ENCODE measurements at regions of chr3 and their contacts with region 1.

Region 1: DNA sequence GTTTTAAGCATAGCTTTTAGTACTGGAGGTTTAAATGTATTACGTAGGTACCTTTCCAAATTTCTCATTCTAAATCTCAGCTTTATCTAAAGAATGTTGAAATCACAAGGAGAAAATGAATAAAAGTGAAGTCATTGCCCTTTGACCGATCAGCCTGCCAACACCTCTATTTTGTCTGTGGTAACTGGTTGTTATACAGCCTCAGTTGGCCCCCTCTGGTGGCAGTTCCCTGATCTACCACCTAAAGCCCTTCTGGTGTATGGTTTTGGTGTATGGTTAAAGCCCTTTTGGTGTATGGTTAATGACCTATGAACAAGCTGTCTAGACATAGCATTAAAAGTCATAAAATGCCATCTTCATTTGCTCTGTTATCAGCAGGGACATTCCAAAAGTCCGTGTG is 378.2 kb upstream of the AZI2 start:
- DNase-seq: peak in 2 of 3 donors; percentile 66 to 83
- ATAC-seq: peak; percentile 74 to 81
- H3K4me3 ChIP-seq: no peak overlapping the region
- H3K27ac ChIP-seq: no peak overlapping the region
- H3K4me1 ChIP-seq: no peaks in the 10 kb centered on the region
- H3K27me3 ChIP-seq: no peaks in the 10 kb centered on the region

Region 2: GRCh38 chr3:28476194-28476593 is 250.6 kb before region 1 on chr3:
- intact Hi-C with region 1: loop called in 1 of 4 experiments (anchors 5 kb)
- DNase-seq: no peak
- ATAC-seq: no peak
- H3K4me3 ChIP-seq: no peak overlapping the region
- H3K27ac ChIP-seq: no peak overlapping the region
- H3K4me1 ChIP-seq: no peaks in the 10 kb centered on the region
- H3K27me3 ChIP-seq: no peaks in the 10 kb centered on the region

Region 3: GRCh38 chr3:28677581-28677980 is 49.3 kb before region 1 on chr3:
- intact Hi-C with region 1: loop called in 1 of 4 experiments (anchors 10 kb)
- DNase-seq: peak in 1 of 3 donors; percentile 52
- ATAC-seq: no peak
- H3K4me3 ChIP-seq: no peak overlapping the region
- H3K27ac ChIP-seq: no peak overlapping the region
- H3K4me1 ChIP-seq: no peaks in the 10 kb centered on the region
- H3K27me3 ChIP-seq: no peaks in the 10 kb centered on the region

Region 4: GRCh38 chr3:28860307-28860706 is 133.5 kb after region 1 on chr3:
- intact Hi-C with region 1: no loop called
- DNase-seq: peak; percentile 59 to 83 (median 79)
- ATAC-seq: peak; percentile 87 to 92
- H3K4me3 ChIP-seq: no peak overlapping the region
- H3K27ac ChIP-seq: no peak overlapping the region
- H3K4me1 ChIP-seq: no peaks in the 10 kb centered on the region
- H3K27me3 ChIP-seq: no peaks in the 10 kb centered on the region